ENCODE measurements at regions of chr10 and their contacts with region 1.

Region 1: GRCh38 chr10:128451879-128452278 is 325.7 kb upstream of the MKI67 start:
- DNase-seq: no peak
- H3K4me3 ChIP-seq: no peak overlapping the region
- H3K27ac ChIP-seq: no peak overlapping the region
- H3K4me1 ChIP-seq: no peaks in the 10 kb centered on the region
- H3K27me3 ChIP-seq: no peaks in the 10 kb centered on the region
- CTCF ChIP-seq: no peak
- POLR2A ChIP-seq: no peak

Region 2: GRCh38 chr10:128493811-128494210 is 41.9 kb after region 1 on chr10:
- intact Hi-C with region 1: loop called (anchors 2 kb)
- DNase-seq: no peak
- H3K4me3 ChIP-seq: no peak overlapping the region
- H3K27ac ChIP-seq: no peak overlapping the region
- H3K4me1 ChIP-seq: no peaks in the 10 kb centered on the region
- H3K27me3 ChIP-seq: no peaks in the 10 kb centered on the region
- CTCF ChIP-seq: no peak
- POLR2A ChIP-seq: no peak